K562 (cell line): ENCODE measurements at regions of chr5 and their contacts with region 1.

Region 1: DNA sequence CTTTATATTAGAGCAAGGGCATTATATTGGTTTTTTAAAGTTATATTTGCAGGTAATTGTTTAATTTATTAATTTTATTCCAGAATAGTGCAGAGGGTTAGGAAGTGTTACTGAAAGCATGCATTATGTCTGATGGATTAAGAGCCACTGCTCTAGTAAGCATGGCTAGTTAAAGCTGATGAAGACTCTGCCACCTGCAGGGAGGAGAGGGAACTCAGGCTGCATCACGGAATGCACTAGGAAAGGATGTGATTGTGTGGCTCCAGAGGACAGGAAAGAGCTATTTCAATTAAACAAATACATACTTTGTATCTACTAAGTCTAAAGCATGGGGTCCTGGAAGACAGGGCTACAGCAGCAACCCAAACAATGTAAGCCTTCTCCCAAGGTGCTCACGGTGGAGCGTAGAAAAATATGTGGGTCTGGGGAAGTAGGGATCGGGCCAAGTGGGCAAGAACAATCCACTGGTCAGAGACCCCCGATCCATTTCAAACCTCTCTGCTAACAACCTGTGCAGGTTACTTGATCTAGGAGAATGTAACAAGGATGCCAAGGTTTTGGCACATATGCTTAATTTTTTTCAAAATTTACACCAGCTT is 15.3 kb upstream of the GRXCR2 start:
- DNase-seq: peak; percentile 46 to 74 (median 58)
- ATAC-seq: peak; percentile 97
- H3K4me3 ChIP-seq: no peak overlapping the region
- H3K27ac ChIP-seq: no peak overlapping the region
- H3K4me1 ChIP-seq: no peaks in the 10 kb centered on the region
- H3K27me3 ChIP-seq: no peaks in the 10 kb centered on the region
- CTCF ChIP-seq: peak; percentile 78 to 86 (median 78)
- EP300 ChIP-seq: no peak
- POLR2A ChIP-seq: no peak
- RAD21 ChIP-seq: peak; percentile 80 to 88

Region 2: DNA sequence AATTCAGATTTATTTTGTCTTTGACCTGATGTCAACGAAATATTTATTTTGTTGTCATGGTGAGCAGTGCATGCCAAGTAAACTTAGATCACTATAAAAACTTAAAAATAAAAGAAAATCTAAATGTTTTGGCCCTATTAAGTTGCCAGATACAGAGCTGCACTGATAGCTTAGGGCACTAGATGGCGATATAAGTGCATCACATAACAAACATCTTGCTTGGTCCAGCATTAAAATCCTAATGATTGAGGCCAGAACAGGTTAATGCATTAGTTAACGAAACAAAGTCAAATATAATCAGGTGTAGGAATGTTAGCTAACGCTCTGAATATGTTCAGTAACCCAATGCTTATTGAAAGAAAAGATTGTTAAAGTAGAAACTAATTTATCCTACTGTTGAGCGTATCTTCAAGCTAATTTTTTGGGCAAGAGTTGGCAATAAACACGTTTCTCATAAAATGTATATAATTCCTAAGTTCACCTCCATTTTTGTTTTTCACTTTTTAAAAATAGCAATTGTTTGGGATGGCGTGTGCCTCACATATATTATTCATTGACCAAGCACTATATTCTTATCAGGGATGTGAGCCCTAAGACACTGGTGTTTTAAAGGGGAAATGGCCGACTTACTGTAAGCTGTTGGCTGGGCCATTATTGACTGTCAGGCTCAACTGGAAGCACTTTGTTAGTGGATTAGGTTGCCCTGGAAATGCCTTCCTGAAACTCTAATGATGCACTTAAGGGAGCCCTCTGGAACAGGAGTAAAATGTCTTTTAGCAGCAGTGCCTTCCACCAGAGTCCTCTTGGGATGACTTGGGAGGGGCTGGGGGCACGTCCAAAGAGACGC is 1684.1 kb before region 1 on chr5:
- CTCF ChIA-PET with region 1: no interaction called
- POLR2A ChIA-PET with region 1: no interaction called
- in situ Hi-C with region 1: no loop called
- intact Hi-C with region 1: loop called (anchors 2 kb)
- DNase-seq: peak; percentile 26 to 67 (median 32)
- ATAC-seq: peak; percentile 88
- H3K4me3 ChIP-seq: no peak overlapping the region
- H3K27ac ChIP-seq: no peak overlapping the region
- H3K4me1 ChIP-seq: peaks cover 0 to 4% of the 10 kb centered on the region in 2 experiments; a peak in 2 of 5 replicates
- H3K27me3 ChIP-seq: peaks cover 3 to 6% of the 10 kb centered on the region in 2 experiments; a peak in 2 of 5 replicates
- CTCF ChIP-seq: peak; percentile 59 to 82 (median 77)
- EP300 ChIP-seq: no peak
- POLR2A ChIP-seq: no peak
- RAD21 ChIP-seq: peak; percentile 80 to 87

Region 3: DNA sequence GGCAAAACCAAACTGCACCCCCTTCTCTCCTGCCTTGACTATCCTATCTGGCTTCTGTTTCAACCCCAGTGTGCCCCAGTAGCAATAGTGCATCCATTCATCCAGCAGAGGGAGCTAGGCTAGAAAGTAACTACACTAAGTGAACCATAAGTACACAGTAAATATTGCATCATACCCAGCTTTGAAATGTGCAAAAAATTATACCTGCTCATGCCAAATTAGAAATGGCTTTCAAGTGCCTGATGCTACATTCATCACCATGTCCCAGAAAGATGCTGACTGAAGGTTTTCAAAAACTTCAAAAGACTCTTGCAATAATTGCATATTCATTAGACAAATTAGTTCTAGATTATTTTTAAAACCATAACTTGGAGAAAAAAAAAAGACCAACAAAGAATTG is 206.4 kb before region 1 on chr5:
- CTCF ChIA-PET with region 1: no interaction called
- POLR2A ChIA-PET with region 1: no interaction called
- in situ Hi-C with region 1: loop called (anchors 10 kb)
- intact Hi-C with region 1: loop called (anchors 1 kb)
- DNase-seq: peak; percentile 73 to 80 (median 76)
- ATAC-seq: peak; percentile 98
- H3K4me3 ChIP-seq: no peak overlapping the region
- H3K27ac ChIP-seq: no peak overlapping the region
- H3K4me1 ChIP-seq: peaks cover 0 to 10% of the 10 kb centered on the region in 2 experiments; a peak in 2 of 5 replicates
- H3K27me3 ChIP-seq: no peaks in the 10 kb centered on the region
- CTCF ChIP-seq: peak; percentile 78 to 87 (median 84)
- EP300 ChIP-seq: peak; percentile 57; the same call in 1 of the 2 replicates
- POLR2A ChIP-seq: no peak
- RAD21 ChIP-seq: peak; percentile 82 to 87

Region 4: GRCh38 chr5:145697251-145697990 is 190.7 kb before region 1 on chr5:
- CTCF ChIA-PET with region 1: interaction called, 10 read pairs
- POLR2A ChIA-PET with region 1: no interaction called
- in situ Hi-C with region 1: no loop called
- intact Hi-C with region 1: loop called (anchors 1 kb)
- DNase-seq: peak; percentile 19 to 69 (median 34)
- ATAC-seq: peak; percentile 96
- H3K4me3 ChIP-seq: no peak overlapping the region
- H3K27ac ChIP-seq: no peak overlapping the region; the same call in 2 of the 3 replicates
- H3K4me1 ChIP-seq: 0 out of 5 replicates have a peak, but pooled peaks cover 0 to 2% of the 10 kb centered on the region in 2 experiments
- H3K27me3 ChIP-seq: no peaks in the 10 kb centered on the region
- CTCF ChIP-seq: peak; percentile 74 to 79 (median 77)
- EP300 ChIP-seq: no peak
- POLR2A ChIP-seq: no peak
- RAD21 ChIP-seq: peak; percentile 74 to 87

Region 5: DNA sequence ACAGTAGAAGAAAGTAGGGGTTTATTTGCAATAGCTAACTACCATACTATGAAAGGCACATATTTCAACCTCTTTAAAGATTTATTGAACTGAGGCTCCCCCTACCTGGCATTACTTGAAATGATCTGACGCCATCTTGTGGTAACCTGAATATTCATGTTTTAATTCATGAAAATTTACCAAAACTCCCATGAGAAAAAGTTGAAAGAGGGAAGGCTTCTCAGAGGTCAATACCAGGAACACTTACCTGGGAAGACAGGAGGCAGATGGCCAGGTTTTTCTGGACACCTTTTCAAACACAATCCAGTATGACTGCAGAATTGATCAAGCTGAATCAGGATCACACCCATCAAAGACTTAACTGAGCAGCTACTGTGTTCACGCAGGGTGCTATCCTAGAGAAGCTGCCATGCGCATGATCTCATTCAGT is 62.3 kb before region 1 on chr5:
- CTCF ChIA-PET with region 1: interaction called, 6 read pairs
- POLR2A ChIA-PET with region 1: no interaction called
- in situ Hi-C with region 1: loop called (anchors 5 kb)
- intact Hi-C with region 1: loop called (anchors 2 kb)
- DNase-seq: peak; percentile 37 to 69 (median 41)
- ATAC-seq: peak; percentile 75
- H3K4me3 ChIP-seq: no peak overlapping the region
- H3K27ac ChIP-seq: no peak overlapping the region
- H3K4me1 ChIP-seq: peaks cover 3 to 21% of the 10 kb centered on the region in 2 experiments; a peak in 3 of 5 replicates
- H3K27me3 ChIP-seq: no peaks in the 10 kb centered on the region
- CTCF ChIP-seq: peak; percentile 77 to 99 (median 97)
- EP300 ChIP-seq: no peak
- POLR2A ChIP-seq: no peak
- RAD21 ChIP-seq: peak; percentile 79 to 80

Region 6: GRCh38 chr5:145834917-145835847 is 52.9 kb before region 1 on chr5 and contains the start of gene PRELID2:
- CTCF ChIA-PET with region 1: no interaction called
- POLR2A ChIA-PET with region 1: no interaction called
- in situ Hi-C with region 1: loop called (anchors 5 kb)
- intact Hi-C with region 1: loop called (anchors 2 kb)
- DNase-seq: peak; percentile 90 to 97 (median 90)
- ATAC-seq: peak; percentile 95
- H3K4me3 ChIP-seq: peak within 1 kb of the TSS; percentile 80
- H3K27ac ChIP-seq: peak within 1 kb of the TSS; percentile 87
- H3K4me1 ChIP-seq: peaks cover 14 to 54% of the 10 kb centered on the region in 2 experiments
- H3K27me3 ChIP-seq: no peaks in the 10 kb centered on the region
- CTCF ChIP-seq: peak; percentile 29 to 70 (median 55); a peak in 5 of 6 replicates
- EP300 ChIP-seq: peak; percentile 44; the same call in 1 of the 2 replicates
- POLR2A ChIP-seq: peak; percentile 84
- RAD21 ChIP-seq: peak; percentile 48 to 56
- polyA plus RNA-seq, gene PRELID2: 6.4 to 7.8 TPM

Region 7: GRCh38 chr5:145943674-145944121 is 55.6 kb after region 1 on chr5:
- CTCF ChIA-PET with region 1: no interaction called
- POLR2A ChIA-PET with region 1: no interaction called
- in situ Hi-C with region 1: no loop called
- intact Hi-C with region 1: no loop called
- DNase-seq: peak in 2 of 4 experiments; percentile 20 to 38
- ATAC-seq: peak; percentile 57
- H3K4me3 ChIP-seq: no peak overlapping the region
- H3K27ac ChIP-seq: no peak overlapping the region
- H3K4me1 ChIP-seq: no peaks in the 10 kb centered on the region
- H3K27me3 ChIP-seq: peaks cover 4 to 6% of the 10 kb centered on the region in 2 experiments; a peak in 4 of 5 replicates
- CTCF ChIP-seq: no peak
- EP300 ChIP-seq: no peak
- POLR2A ChIP-seq: no peak
- RAD21 ChIP-seq: no peak